Esophagus squamous epithelium (tissue), 5 donors: ENCODE measurements at regions of chr6 and their contacts with region 1.

Region 1: DNA sequence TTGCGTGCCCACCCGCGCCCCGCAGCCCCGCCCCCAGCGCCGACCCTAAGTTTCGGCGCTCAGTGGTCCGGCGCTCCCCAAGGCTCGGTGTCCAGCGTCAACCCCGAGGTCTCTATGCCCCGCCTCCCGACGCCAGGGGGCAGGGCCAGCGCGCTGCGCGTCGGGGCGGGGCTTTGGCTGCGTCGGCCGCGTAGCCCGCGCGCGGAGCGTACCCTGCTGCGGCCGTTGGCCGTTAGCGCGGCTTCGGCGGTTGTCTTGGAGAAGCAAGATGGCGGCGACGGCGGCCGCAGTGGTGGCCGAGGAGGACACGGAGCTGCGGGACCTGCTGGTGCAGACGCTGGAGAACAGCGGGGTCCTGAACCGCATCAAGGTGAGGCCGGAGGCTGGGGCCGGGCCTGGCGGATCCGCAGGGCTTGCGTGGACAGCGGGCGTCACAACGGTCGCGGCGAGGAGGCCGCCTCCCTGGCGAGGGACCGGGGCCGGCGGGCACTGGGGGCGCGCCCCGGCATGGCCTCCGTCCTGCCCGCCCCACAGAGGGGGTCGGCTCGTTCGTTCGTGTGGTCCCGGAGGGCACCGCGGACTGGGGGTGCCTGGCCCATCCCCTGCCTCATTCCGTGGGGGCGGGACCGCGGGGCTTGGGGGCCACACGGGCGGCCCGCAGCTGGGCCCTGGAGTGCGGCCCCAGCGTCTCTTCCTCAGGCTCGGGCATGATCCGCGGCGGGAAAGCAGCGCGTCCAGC is at the start of gene CEP43:
- DNase-seq: peak; percentile 73
- H3K4me3 ChIP-seq: peak within 1 kb of the TSS; percentile 90 to 99 (median 96)
- H3K27ac ChIP-seq: peak within 1 kb of the TSS; percentile 71 to 86 (median 82)
- H3K4me1 ChIP-seq: peaks cover 0 to 33% (median 16%) of the 10 kb centered on the region in 3 donors
- H3K27me3 ChIP-seq: no peaks in the 10 kb centered on the region
- CTCF ChIP-seq: peak in 3 of 6 experiments; percentile 37 to 45 (median 38)
- POLR2A ChIP-seq: peak in 1 of 4 donors; percentile 56
- total RNA-seq, gene CEP43: 13.0 to 18.6 (median 13.3) TPM

Region 2: DNA sequence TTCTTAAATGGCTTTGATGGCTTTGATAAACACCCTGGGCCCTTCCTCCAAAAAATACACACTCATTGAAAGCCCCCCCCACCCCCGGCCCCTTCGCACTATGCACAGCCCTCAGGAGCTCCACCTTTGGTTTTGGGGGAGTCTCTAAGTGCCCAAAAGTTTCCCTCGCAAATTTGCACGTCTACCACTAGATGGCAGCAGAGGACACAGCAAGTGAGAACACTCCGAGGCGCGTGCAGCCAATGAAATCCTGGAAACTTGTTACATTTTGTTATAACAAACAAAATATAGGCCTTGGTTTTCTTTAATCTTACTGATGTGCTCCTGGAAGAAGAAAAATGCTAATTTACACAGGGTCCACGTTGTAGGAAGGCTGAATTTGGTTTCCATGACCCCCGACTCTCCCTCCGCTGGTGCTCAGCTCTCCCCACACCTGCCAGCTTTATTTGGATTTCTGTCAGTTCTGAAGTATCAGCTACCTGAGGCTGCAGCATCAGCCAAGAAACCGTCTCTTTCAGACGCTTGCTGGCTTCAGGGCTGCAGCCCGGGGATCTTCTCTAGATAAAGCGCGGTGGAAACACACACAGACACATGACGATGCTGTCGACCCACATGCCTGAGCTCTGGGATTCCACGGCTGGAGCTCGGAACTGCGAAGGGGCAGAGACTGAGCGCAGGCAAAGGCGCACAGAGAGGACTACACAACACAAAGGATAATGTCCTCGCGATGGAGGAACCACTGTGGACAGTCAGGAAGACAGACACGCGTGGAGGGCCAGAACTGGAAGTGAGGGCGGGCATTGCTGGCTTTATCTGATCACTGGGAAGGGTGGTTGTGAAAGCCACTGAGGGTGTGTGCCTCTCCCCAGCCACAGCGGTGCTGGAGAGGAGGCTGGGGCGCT is 223.9 kb before region 1 on chr6:
- intact Hi-C with region 1: loop called (anchors 10 kb)
- DNase-seq: no peak
- H3K4me3 ChIP-seq: no peak overlapping the region
- H3K27ac ChIP-seq: no peak overlapping the region
- H3K4me1 ChIP-seq: peaks cover 0 to 7% (median 0%) of the 10 kb centered on the region in 3 donors
- H3K27me3 ChIP-seq: peaks cover 0 to 33% (median 0%) of the 10 kb centered on the region in 4 donors
- CTCF ChIP-seq: peak; percentile 54 to 85 (median 78)
- POLR2A ChIP-seq: no peak

Region 3: DNA sequence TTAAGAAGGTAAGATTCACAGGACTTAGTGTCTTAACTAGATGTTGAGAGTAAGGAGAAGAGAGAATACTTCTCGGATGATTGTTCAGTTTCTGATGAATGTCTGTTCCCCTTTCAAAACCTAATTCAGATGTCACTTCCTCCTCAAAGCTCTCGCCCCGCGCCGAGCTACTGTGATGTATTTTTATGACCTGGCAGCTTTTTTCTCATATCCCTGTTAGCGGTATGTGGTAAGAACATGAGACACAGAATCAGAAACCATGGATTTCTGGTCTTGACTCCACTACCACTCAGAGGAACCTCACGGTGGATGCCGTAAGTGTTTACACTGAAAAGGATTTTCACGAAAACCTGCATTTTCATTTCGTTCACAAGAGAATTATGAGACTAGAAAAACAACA is 48.2 kb after region 1 on chr6:
- intact Hi-C with region 1: no loop called
- DNase-seq: no peak
- H3K4me3 ChIP-seq: peak overlapping the region in 1 of 4 donors; percentile 10
- H3K27ac ChIP-seq: peak overlapping the region in 1 of 4 donors; percentile 61
- H3K4me1 ChIP-seq: no peaks in the 10 kb centered on the region
- H3K27me3 ChIP-seq: no peaks in the 10 kb centered on the region
- CTCF ChIP-seq: no peak
- POLR2A ChIP-seq: no peak